Activated CD4-positive, alpha-beta memory T cell treated with anti-CD3 and anti-CD28 coated beads for 36 hours (primary cell): ENCODE measurements at regions of chr17 and their contacts with region 1.

Region 1: GRCh38 chr17:39244600-39245570 is 19.1 kb upstream of the STAC2 start:
- DNase-seq: peak; percentile 91
- H3K4me3 Mint-ChIP-seq: no peak overlapping the region
- H3K27ac Mint-ChIP-seq: no peak overlapping the region
- H3K4me1 Mint-ChIP-seq: peaks cover 5% of the 10 kb centered on the region
- H3K27me3 Mint-ChIP-seq: no peaks in the 10 kb centered on the region

Region 2: DNA sequence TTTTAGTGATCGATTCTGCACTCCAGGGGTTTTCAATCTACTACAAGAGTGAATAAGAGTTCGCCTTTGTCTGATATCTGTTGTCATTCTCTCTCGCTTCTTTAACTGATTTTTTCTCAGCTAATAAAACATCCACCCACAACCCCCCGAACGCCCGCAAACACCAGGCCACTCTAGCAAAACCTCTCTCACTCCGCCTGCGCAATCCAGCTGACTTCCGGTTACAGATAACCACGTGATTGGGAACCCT is 45.1 kb before region 1 on chr17:
- CTCF ChIA-PET with region 1: interaction called, 580 read pairs
- POLR2A ChIA-PET with region 1: no interaction called
- intact Hi-C with region 1: no loop called
- DNase-seq: peak; percentile 93
- H3K4me3 Mint-ChIP-seq: peak overlapping the region; percentile 95
- H3K27ac Mint-ChIP-seq: peak overlapping the region; percentile 97
- H3K4me1 Mint-ChIP-seq: peaks cover 59% of the 10 kb centered on the region
- H3K27me3 Mint-ChIP-seq: no peaks in the 10 kb centered on the region

Region 3: DNA sequence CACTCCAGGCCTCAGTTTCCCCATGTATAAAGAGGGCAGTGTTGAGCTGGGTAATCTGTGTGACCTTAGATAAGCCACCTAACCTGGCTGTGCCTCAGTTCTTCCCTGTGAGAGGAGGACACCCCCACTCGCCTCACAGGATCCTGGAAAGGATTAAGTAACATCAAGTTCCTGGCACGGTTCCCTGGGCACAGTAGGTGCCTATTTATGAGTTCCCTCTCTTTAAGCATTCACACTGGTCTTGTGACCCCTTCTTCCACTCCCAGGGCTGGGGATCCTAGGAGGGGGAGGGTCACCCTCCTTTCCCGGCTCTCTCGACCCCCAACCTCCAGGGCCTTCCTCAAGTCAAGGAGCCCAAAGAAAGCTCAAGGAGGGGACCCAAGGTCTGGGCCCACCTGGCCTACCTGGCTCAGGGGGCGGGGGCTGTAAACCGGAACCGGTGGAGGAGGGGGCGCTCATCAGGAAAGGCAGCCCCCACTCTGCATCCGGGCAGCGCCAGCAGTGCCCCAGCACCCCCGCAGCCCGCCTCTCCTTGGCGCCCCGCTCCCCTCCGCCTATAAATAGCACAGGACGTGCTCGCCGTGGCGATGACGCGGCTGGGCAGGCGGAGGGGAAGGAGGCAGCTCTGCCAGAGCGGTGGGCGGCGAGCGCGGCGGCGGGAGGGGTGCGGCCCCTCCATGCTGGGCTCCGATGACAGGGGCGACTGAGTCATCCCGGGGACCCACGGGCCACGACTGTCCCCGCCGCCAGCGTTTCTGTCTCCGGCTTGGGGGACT is 35.4 kb before region 1 on chr17:
- CTCF ChIA-PET with region 1: interaction called, 580 read pairs
- POLR2A ChIA-PET with region 1: interaction called, 6 read pairs
- intact Hi-C with region 1: loop called (anchors 1 kb)
- DNase-seq: peak; percentile 83
- H3K4me3 Mint-ChIP-seq: no peak overlapping the region
- H3K27ac Mint-ChIP-seq: no peak overlapping the region
- H3K4me1 Mint-ChIP-seq: peaks cover 27% of the 10 kb centered on the region
- H3K27me3 Mint-ChIP-seq: no peaks in the 10 kb centered on the region

Region 4: DNA sequence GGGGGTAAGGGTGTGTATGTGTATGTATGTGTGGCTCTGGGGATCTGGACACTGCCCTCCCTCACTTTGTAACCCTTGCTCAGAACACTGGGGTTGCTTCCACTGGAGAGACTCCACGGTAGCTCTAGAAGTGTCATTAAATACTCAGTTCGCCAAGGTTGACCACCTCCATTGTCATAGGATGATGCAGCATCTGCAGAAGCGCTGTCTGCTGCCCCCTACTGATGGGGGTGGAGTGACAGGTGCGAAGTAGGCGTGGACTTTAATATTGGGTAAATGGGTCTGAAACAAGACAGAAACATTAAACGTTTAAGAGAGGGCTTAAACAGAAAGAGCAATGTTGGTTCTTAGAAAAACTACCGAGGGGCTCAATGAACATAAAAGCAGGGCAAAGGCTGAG is 16.4 kb after region 1 on chr17:
- CTCF ChIA-PET with region 1: interaction called, 14 read pairs
- POLR2A ChIA-PET with region 1: no interaction called
- intact Hi-C with region 1: no loop called
- DNase-seq: peak; percentile 39
- H3K4me3 Mint-ChIP-seq: no peak overlapping the region
- H3K27ac Mint-ChIP-seq: no peak overlapping the region
- H3K4me1 Mint-ChIP-seq: no peaks in the 10 kb centered on the region
- H3K27me3 Mint-ChIP-seq: no peaks in the 10 kb centered on the region

Region 5: GRCh38 chr17:39339272-39339671 is 94.4 kb after region 1 on chr17:
- CTCF ChIA-PET with region 1: no interaction called
- POLR2A ChIA-PET with region 1: no interaction called
- intact Hi-C with region 1: no loop called
- DNase-seq: no peak
- H3K4me3 Mint-ChIP-seq: no peak overlapping the region
- H3K27ac Mint-ChIP-seq: no peak overlapping the region
- H3K4me1 Mint-ChIP-seq: no peaks in the 10 kb centered on the region
- H3K27me3 Mint-ChIP-seq: no peaks in the 10 kb centered on the region